H1 (cell line): ENCODE measurements at regions of chr1 and their contacts with region 1.

Region 1: GRCh38 chr1:118984086-118984721 is 3.9 kb downstream of the TBX15 start:
- DNase-seq: peak; percentile 80 to 81
- H3K4me3 ChIP-seq: peak overlapping the region; percentile 10 to 51 (median 14); a peak in 5 of 8 replicates
- H3K27ac ChIP-seq: no peak overlapping the region
- H3K4me1 ChIP-seq: peaks cover 7 to 27% (median 13%) of the 10 kb centered on the region in 4 experiments
- H3K27me3 ChIP-seq: peaks cover 88 to 100% (median 98%) of the 10 kb centered on the region in 4 experiments
- CTCF ChIP-seq: peak in 1 of 3 experiments; percentile 28; a peak in 1 of 4 replicates
- EP300 ChIP-seq: no peak
- POLR2A ChIP-seq: no peak
- RAD21 ChIP-seq: peak; percentile 45 to 58

Region 2: GRCh38 chr1:118963138-118963455 is 21.1 kb before region 1 on chr1:
- CTCF ChIA-PET with region 1: no interaction called
- POLR2A ChIA-PET with region 1: no interaction called
- DNase-seq: no peak
- H3K4me3 ChIP-seq: no peak overlapping the region
- H3K27ac ChIP-seq: no peak overlapping the region
- H3K4me1 ChIP-seq: peaks cover 1 to 11% (median 8%) of the 10 kb centered on the region in 4 experiments; a peak in 5 of 7 replicates
- H3K27me3 ChIP-seq: peaks cover 0 to 1% (median 0%) of the 10 kb centered on the region in 4 experiments; a peak in 1 of 7 replicates
- CTCF ChIP-seq: no peak
- EP300 ChIP-seq: no peak
- POLR2A ChIP-seq: no peak
- RAD21 ChIP-seq: no peak

Region 3: DNA sequence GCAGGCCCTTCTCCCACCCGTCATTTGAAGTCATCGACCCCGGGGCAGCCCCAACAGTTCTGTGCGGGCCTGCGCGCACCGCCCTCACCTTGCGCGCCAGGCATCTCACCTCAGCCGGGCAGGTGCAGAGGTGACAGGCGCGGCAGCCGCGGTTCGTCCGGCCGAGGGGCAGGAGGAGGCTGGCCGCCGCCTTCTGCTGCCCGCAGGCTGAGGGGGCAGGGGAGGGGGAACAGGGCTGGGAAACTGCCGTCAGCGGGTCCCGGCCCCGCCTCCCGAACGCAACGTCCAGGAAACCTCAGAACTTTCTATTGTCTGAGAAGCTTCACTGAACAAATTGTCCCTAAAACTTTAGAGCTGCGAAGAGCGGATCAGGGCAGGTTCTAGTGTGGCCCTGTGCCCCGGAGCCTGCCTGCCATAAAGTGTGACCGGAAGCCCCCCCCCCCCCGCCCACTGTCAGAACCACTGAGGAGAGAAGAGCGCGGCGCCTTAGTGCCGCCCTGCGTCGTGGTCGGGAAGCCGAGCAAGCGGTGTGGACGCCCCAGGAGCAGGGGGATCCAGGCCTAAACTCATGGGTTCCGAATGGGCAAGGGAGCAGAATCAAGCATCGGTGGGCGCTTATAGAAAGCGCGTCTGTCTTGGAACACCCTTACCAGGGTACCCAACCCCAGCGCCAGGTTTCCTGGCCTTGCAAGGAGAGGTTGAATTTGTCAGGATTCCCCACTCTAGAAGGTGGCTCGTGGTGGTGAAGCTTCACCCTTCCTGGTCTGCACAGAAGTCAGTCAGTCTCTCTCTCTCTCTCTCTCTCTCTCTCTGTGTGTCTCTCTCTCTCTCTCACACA is 17.2 kb after region 1 on chr1:
- CTCF ChIA-PET with region 1: interaction called, 13 read pairs
- POLR2A ChIA-PET with region 1: interaction called, 7 read pairs
- DNase-seq: peak in 1 of 2 experiments; percentile 60
- H3K4me3 ChIP-seq: peak overlapping the region; percentile 4 to 53 (median 28); a peak in 5 of 8 replicates
- H3K27ac ChIP-seq: no peak overlapping the region
- H3K4me1 ChIP-seq: peaks cover 9 to 31% (median 11%) of the 10 kb centered on the region in 4 experiments
- H3K27me3 ChIP-seq: peaks cover 96 to 100% (median 99%) of the 10 kb centered on the region in 4 experiments
- CTCF ChIP-seq: no peak
- EP300 ChIP-seq: no peak
- POLR2A ChIP-seq: no peak
- RAD21 ChIP-seq: no peak